Left ventricle myocardium superior (tissue), 1 donor: ENCODE measurements at regions of chr14 and their contacts with region 1.

Region 1: DNA sequence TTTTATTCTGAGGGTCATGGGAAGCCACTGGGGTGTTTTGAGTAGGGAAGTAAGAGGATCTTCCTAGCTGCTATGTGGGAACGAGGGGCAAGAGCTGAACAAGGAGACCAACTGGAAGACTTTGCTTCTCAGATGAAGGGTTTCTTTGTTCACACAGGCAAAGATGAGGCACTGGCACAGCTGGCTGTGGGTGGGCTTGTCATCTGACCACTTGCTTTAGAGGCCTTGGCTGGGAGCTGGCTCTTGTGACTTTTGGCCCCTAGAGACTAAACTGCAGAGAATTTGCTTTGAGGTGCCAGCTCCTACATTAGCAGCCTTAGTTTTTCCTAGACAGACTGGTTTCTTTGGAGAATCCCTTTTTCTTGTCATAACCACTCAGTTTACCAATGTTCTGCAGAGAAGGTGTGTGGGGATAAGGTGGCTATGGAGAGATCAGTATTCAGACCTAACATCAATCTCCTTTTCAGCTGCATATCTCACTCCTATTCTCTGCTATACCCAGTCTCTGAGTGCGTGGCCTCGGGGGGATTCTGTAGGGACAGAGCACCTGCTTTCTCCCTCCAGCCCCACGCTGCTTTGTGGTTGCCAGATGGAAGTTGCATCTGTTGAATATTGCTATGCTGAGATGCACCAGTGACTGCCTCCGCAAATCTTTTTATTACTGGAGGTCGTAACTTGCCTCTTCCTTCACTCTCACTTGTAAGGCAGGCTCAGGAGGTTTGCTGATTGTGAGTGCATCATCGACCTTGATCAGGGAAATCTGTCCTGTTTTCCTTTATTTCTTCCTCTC is 12.7 kb downstream of the PPP2R5C start:
- DNase-seq: no peak
- ATAC-seq: no peak

Region 2: GRCh38 chr14:101947906-101948665 is 173.9 kb after region 1 on chr14:
- intact Hi-C with region 1: loop called (anchors 10 kb)
- DNase-seq: peak; percentile 100
- ATAC-seq: peak; percentile 98